Endothelial cell of umbilical vein (primary cell): ENCODE measurements at regions of chr3 and their contacts with region 1.

Region 1: GRCh38 chr3:141514382-141514781 is 27.6 kb downstream of the RASA2 start:
- DNase-seq: no peak
- H3K4me3 ChIP-seq: no peak overlapping the region
- H3K27ac ChIP-seq: no peak overlapping the region
- H3K4me1 ChIP-seq: no peaks in the 10 kb centered on the region
- H3K27me3 ChIP-seq: no peaks in the 10 kb centered on the region
- CTCF ChIP-seq: no peak
- POLR2A ChIP-seq: no peak

Region 2: DNA sequence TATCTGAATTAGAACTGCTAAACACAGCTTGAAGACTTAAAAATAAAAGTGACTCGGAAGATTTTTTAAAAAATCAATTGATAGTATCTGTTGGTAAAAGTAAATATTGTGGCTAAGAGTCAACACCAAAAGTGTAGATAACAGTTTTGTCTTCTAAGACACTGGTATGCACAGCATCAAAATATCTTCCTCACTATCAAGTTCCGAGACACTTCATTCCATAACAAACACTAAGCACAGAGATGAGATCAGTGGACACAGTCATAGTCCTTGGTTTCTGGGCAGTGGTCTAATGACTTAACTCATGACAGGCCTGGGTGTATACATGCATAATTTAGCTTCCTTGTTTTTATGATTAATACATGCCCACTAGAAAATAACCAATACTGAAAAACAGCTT is 219.5 kb before region 1 on chr3:
- CTCF ChIA-PET with region 1: no interaction called
- POLR2A ChIA-PET with region 1: no interaction called
- dilution Hi-C with region 1: no loop called
- intact Hi-C with region 1: no loop called
- DNase-seq: peak; percentile 82
- H3K4me3 ChIP-seq: peak overlapping the region; percentile 18 to 85 (median 77)
- H3K27ac ChIP-seq: peak overlapping the region; percentile 65
- H3K4me1 ChIP-seq: peaks cover 8% of the 10 kb centered on the region
- H3K27me3 ChIP-seq: no peaks in the 10 kb centered on the region
- CTCF ChIP-seq: no peak
- POLR2A ChIP-seq: no peak

Region 3: DNA sequence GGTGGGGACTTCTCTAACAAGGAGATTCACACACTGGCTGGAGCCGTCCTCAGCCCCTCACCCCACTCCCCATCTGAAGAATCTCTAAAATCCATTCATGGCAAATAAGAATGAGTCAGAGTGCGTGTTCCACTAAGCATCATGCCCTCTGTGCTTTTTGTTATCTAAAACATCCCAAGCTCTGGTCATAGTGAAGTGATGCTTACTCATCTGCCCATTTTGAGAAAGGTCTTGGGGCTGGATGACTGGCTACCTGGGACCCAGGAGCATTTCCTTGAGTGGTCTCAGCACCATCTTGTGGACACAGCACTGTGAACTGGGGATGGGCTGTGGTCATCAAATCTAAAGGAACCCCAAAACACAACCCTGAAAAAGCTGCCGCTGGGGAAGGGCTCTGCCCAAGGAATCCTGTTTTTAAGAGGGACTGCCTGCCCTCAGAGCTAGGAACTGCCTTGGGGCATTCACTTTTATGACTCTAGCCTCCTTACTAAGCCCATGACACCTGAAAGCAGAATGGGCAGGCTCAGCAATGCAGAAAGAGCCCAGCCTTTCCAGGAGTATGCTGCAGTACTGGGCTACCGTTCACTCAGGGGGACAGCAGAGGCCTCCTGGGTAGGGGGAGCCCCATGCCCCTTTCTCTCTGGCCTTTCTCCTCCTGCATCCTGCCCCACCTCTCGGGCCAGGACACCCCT is 92.6 kb before region 1 on chr3:
- CTCF ChIA-PET with region 1: no interaction called
- POLR2A ChIA-PET with region 1: no interaction called
- dilution Hi-C with region 1: no loop called
- intact Hi-C with region 1: no loop called
- DNase-seq: no peak
- H3K4me3 ChIP-seq: no peak overlapping the region
- H3K27ac ChIP-seq: peak overlapping the region; percentile 12
- H3K4me1 ChIP-seq: peaks cover 20% of the 10 kb centered on the region
- H3K27me3 ChIP-seq: no peaks in the 10 kb centered on the region
- CTCF ChIP-seq: no peak
- POLR2A ChIP-seq: no peak

Region 4: GRCh38 chr3:141498598-141499223 is 15.7 kb before region 1 on chr3:
- CTCF ChIA-PET with region 1: interaction called, 15 read pairs
- POLR2A ChIA-PET with region 1: no interaction called
- dilution Hi-C with region 1: no loop called
- intact Hi-C with region 1: loop called (anchors 2 kb)
- DNase-seq: no peak
- H3K4me3 ChIP-seq: no peak overlapping the region
- H3K27ac ChIP-seq: no peak overlapping the region
- H3K4me1 ChIP-seq: peaks cover 3% of the 10 kb centered on the region
- H3K27me3 ChIP-seq: no peaks in the 10 kb centered on the region
- CTCF ChIP-seq: no peak
- POLR2A ChIP-seq: no peak

Region 5: GRCh38 chr3:141530133-141530768 is 15.9 kb after region 1 on chr3:
- CTCF ChIA-PET with region 1: interaction called, 14 read pairs
- POLR2A ChIA-PET with region 1: no interaction called
- dilution Hi-C with region 1: no loop called
- intact Hi-C with region 1: no loop called
- DNase-seq: peak; percentile 81
- H3K4me3 ChIP-seq: peak overlapping the region in 1 of 3 experiments; percentile 17
- H3K27ac ChIP-seq: peak overlapping the region; percentile 45
- H3K4me1 ChIP-seq: peaks cover 27% of the 10 kb centered on the region
- H3K27me3 ChIP-seq: no peaks in the 10 kb centered on the region
- CTCF ChIP-seq: no peak
- POLR2A ChIP-seq: no peak